ENCODE measurements at regions of chr3 and their contacts with region 1.

Region 1: DNA sequence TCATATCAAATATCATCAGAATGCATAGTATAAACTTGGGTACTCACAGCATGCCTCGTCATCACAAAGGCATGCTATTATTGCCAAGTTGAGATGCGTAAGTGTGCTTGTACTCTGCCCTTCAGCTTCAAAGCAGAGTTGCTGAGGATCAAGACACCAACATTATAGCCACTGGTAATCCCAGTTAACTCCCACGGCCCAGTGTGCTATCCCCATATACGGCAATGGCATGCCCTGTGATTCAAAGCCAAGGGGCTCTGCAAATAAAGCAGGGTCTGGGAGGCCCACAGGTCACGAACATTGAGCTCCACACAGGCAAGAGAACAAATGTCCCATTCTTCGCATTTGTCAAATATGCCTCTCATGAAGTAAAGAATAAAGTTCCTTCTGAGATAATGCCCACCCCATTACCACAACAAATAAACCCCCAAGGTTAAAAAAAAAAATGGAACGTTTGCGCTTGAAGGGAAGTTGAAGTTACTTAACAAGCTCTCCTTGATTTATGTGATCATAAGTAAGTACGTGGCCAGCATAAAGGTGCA is 298.1 kb upstream of the NECTIN3 start:
- DNase-seq: peak; percentile 81 to 94
- H3K4me3 ChIP-seq: no peak overlapping the region
- H3K4me3 Mint-ChIP-seq: no peak overlapping the region
- H3K27ac Mint-ChIP-seq: peak overlapping the region; percentile 65
- H3K4me1 ChIP-seq: peaks cover 36% of the 10 kb centered on the region
- H3K4me1 Mint-ChIP-seq: peaks cover 28% of the 10 kb centered on the region
- H3K27me3 ChIP-seq: no peaks in the 10 kb centered on the region
- H3K27me3 Mint-ChIP-seq: no peaks in the 10 kb centered on the region
- CTCF ChIP-seq: no peak

Region 2: DNA sequence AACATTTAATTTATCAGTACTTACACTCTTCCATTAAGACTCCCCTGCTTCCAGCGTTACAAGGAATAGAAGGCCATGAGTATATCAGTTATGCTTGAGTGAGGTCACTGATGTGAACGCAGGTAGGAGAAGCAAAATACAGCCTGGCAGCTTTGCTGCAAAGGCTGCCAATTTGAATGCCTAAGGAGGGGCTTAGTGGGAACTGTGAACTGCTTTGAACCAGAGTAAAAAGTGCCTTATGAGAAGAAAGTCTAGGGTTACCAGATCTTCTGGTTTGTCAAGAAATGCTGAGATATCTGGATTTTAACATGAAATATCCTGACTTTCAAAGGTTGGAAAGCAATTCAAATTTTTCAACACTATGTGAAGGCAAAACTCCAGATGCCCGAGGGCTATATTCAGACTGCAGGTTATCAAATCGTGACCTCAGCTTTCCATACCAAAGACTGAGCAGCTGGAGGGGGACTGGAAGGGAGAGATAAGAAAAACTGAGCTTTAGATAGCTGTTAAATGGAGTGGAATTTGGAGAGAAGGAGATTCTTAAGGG is 148.2 kb before region 1 on chr3:
- CTCF ChIA-PET with region 1: no interaction called
- POLR2A ChIA-PET with region 1: no interaction called
- intact Hi-C with region 1: loop called (anchors 1 kb)
- DNase-seq: peak; percentile 82 to 89
- H3K4me3 ChIP-seq: no peak overlapping the region
- H3K4me3 Mint-ChIP-seq: peak overlapping the region; percentile 63
- H3K27ac Mint-ChIP-seq: peak overlapping the region; percentile 92
- H3K4me1 ChIP-seq: peaks cover 66% of the 10 kb centered on the region
- H3K4me1 Mint-ChIP-seq: peaks cover 46% of the 10 kb centered on the region
- H3K27me3 ChIP-seq: no peaks in the 10 kb centered on the region
- H3K27me3 Mint-ChIP-seq: no peaks in the 10 kb centered on the region
- CTCF ChIP-seq: no peak

Region 3: DNA sequence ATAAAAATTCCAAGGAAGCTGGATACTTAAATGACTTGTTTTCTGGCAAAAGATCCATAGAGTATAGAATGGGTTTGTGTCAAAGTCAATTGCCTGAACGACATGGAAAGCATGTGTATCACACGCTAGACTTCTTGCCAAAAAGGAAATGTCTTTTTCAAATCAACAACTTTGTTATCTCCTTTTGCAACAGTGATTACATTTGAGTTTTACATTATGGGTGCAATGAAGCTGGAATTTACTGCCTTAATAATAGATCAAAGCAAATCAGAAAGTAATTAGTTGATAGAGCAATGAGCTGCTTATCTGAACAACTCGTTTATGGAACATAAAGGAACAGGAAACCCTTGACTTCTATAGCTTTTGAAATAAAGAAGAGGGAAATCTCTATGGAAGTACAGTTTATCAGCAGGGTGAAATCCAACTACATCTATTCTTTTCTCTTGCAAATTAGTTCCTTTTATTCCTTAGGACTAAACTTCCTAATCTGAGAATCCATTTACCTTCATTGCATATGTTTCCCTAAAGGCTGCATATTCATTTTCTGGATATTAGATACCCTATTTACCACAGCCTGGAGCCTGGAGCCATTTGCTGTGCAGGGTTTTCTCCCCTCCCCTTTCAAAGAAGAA is 117.0 kb before region 1 on chr3:
- CTCF ChIA-PET with region 1: no interaction called
- POLR2A ChIA-PET with region 1: no interaction called
- intact Hi-C with region 1: loop called (anchors 2 kb)
- DNase-seq: no peak
- H3K4me3 ChIP-seq: no peak overlapping the region
- H3K4me3 Mint-ChIP-seq: no peak overlapping the region
- H3K27ac Mint-ChIP-seq: no peak overlapping the region
- H3K4me1 ChIP-seq: peaks cover 38% of the 10 kb centered on the region
- H3K4me1 Mint-ChIP-seq: peaks cover 20% of the 10 kb centered on the region
- H3K27me3 ChIP-seq: no peaks in the 10 kb centered on the region
- H3K27me3 Mint-ChIP-seq: no peaks in the 10 kb centered on the region
- CTCF ChIP-seq: no peak

Region 4: DNA sequence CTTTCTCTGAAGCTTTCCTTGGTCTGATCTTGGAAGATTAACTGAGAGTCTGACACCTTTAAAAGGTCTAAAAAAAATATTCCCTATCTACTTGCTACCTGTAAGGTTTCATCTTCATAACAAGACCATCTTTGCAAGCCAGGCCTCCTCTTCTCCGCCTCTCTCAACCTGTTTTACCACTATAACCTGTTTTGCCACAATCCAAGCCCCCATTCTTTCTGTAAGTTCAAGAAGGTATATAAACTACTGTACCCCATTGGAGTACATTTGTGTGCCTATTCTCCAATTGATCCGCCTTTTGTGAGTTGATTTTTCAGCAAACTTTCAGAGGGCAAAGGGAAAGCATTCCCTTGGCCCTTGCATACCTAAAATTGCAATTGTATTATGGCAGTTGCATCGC is 21.2 kb before region 1 on chr3:
- CTCF ChIA-PET with region 1: no interaction called
- POLR2A ChIA-PET with region 1: no interaction called
- intact Hi-C with region 1: loop called (anchors 1 kb)
- DNase-seq: peak in 1 of 2 experiments; percentile 64
- H3K4me3 ChIP-seq: no peak overlapping the region
- H3K4me3 Mint-ChIP-seq: peak overlapping the region; percentile 55
- H3K27ac Mint-ChIP-seq: peak overlapping the region; percentile 87
- H3K4me1 ChIP-seq: peaks cover 30% of the 10 kb centered on the region
- H3K4me1 Mint-ChIP-seq: peaks cover 15% of the 10 kb centered on the region
- H3K27me3 ChIP-seq: no peaks in the 10 kb centered on the region
- H3K27me3 Mint-ChIP-seq: no peaks in the 10 kb centered on the region
- CTCF ChIP-seq: no peak

Measured in Caco-2 (cell line).